CD4-positive, alpha-beta memory T cell (primary cell): ENCODE measurements at regions of chr1 and their contacts with region 1.

Region 1: DNA sequence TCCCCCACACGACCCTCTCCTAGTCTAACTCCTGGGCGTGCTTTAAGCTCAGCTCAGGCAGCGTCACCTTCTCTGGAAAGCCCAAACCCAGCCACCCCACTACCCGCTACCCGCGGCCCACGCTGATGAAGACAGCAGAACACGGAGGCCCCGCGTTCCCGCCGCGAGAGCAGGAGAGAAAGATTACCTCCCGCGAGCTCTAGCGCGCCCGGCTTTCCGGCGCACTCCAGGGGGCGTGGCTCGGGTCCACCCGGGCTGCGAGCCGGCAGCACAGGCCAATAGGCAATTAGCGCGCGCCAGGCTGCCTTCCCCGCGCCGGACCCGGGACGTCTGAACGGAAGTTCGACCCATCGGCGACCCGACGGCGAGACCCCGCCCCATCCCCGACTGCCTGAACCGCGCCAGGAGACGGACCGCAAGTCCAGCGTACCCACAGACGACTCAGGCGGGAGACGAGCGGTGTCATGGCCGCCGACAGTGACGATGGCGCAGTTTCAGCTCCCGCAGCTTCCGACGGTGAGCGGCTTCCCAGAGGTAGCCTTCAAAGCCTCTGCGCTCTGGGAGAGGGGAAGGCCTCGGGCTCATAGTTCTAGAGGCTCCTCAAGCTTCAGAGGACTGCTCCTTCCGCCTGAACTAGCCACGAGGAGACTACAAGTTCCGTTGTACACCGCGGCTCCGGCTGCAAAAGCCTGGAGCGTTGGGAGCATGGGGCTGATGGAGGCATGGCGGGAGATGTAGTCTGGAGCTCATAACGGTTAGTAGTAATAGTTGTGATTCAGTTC is at the starts of genes MUTYH and TOE1:
- DNase-seq: peak; percentile 89 to 92 (median 90)
- H3K4me3 ChIP-seq: peak within 1 kb of the TSS; percentile 84 to 91
- H3K4me3 Mint-ChIP-seq: peak within 1 kb of the TSS; percentile 98 to 100 (median 100)
- H3K27ac ChIP-seq: peak within 1 kb of the TSS; percentile 93
- H3K27ac Mint-ChIP-seq: peak within 1 kb of the TSS; percentile 96 to 100 (median 99)
- H3K4me1 ChIP-seq: peaks cover 46% of the 10 kb centered on the region
- H3K4me1 Mint-ChIP-seq: peaks cover 31 to 75% (median 51%) of the 10 kb centered on the region in 4 donors
- H3K27me3 ChIP-seq: no peaks in the 10 kb centered on the region
- H3K27me3 Mint-ChIP-seq: no peaks in the 10 kb centered on the region
- total RNA-seq, gene MUTYH: 70.0 to 72.1 TPM
- total RNA-seq, gene TOE1: 18.2 to 18.9 TPM

Region 2: DNA sequence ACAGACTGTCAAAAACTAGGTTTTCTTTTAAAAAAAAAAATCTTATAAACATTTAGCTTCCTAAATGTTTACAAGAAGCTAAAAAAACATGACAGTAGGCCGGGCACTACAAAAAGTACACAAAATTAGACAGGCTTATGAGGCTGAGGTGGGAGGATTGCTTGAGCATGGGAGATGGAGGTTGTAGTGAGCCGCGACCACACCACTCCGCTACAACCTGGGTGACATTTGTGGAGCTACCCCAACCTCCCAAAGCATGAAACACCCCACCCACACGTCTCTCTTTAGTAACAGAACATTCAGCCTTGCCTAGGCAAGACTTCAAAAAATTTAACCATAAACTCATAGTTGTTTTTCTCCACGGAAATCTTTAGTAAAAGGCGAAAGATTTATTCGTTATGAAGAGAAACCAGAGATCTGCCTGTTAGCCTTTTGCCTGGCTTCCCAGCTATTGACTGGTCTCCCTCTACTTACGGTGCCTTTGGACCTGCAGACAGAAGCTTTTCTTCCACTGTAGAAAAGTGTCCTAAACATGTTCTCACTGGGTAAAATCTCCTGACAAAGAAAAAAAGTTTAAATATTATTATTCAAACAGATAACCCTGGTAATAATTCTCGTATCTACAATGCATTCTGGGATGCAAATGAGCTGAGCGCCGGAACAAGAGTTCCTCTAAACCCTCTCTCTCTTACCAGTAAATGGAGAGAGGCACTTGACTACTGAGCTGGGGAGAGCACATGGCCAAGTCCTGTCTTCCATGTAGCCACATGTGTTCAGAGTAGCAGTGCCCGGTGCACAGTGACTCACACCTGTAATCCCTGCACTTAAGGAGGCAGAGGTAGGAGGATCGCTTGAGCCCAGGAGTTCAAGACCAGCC is 618.3 kb before region 1 on chr1:
- CTCF ChIA-PET with region 1: no interaction called
- POLR2A ChIA-PET with region 1: interaction called, 11 read pairs
- intact Hi-C with region 1: no loop called
- DNase-seq: peak; percentile 77 to 85 (median 79)
- H3K4me3 ChIP-seq: no peak overlapping the region
- H3K4me3 Mint-ChIP-seq: peak overlapping the region; percentile 57 to 87 (median 80)
- H3K27ac ChIP-seq: peak overlapping the region; percentile 51
- H3K27ac Mint-ChIP-seq: peak overlapping the region; percentile 89 to 97 (median 94)
- H3K4me1 ChIP-seq: peaks cover 58% of the 10 kb centered on the region
- H3K4me1 Mint-ChIP-seq: peaks cover 50 to 74% (median 62%) of the 10 kb centered on the region in 4 donors
- H3K27me3 ChIP-seq: no peaks in the 10 kb centered on the region
- H3K27me3 Mint-ChIP-seq: no peaks in the 10 kb centered on the region

Region 3: GRCh38 chr1:44775078-44775929 is 564.7 kb before region 1 on chr1 and contains the start of gene RPS8:
- CTCF ChIA-PET with region 1: no interaction called
- POLR2A ChIA-PET with region 1: interaction called, 23 read pairs
- intact Hi-C with region 1: no loop called
- DNase-seq: peak; percentile 89 to 92 (median 91)
- H3K4me3 ChIP-seq: peak within 1 kb of the TSS; percentile 87 to 88
- H3K4me3 Mint-ChIP-seq: peak within 1 kb of the TSS; percentile 89 to 98 (median 94)
- H3K27ac ChIP-seq: peak within 1 kb of the TSS; percentile 78
- H3K27ac Mint-ChIP-seq: peak within 1 kb of the TSS; percentile 82 to 99 (median 98)
- H3K4me1 ChIP-seq: peaks cover 25% of the 10 kb centered on the region
- H3K4me1 Mint-ChIP-seq: peaks cover 20 to 56% (median 27%) of the 10 kb centered on the region in 4 donors
- H3K27me3 ChIP-seq: no peaks in the 10 kb centered on the region
- H3K27me3 Mint-ChIP-seq: no peaks in the 10 kb centered on the region
- total RNA-seq, gene RPS8: 2,728 to 2,811 TPM

Region 4: DNA sequence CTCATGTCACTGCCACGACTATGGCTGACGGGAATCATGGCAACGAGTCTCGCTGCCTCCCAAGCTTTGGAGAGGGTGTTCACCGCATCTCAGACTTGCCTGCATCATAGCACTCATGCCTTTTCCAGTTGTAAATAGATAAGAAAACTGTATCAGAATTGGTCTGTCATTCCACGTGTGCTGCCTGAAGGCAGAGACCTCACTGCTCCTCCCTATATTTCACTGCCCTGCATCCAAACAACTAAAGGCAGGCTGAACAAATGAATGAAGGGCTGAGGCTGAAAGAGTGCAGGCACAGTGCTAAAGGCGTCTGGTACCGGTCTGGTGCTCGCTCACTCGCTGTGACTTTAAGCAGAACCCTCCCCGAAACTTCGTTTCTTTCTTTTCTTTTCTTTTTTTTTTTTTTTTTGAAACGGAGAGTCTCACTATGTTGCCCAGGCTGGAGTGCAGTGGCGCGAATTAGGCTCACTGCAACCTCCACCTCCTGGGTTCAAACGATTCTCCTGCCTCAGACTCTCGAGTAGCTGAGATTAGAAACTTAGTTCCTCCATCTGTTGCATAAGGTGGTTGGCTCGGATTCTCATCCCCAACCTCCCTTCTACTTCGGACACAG is 354.1 kb before region 1 on chr1:
- CTCF ChIA-PET with region 1: interaction called, 3 read pairs
- POLR2A ChIA-PET with region 1: interaction called, 16 read pairs
- intact Hi-C with region 1: no loop called
- DNase-seq: no peak
- H3K4me3 ChIP-seq: peak overlapping the region; percentile 67 to 70
- H3K4me3 Mint-ChIP-seq: peak overlapping the region; percentile 98 to 100 (median 99)
- H3K27ac ChIP-seq: peak overlapping the region; percentile 59
- H3K27ac Mint-ChIP-seq: peak overlapping the region; percentile 34 to 99 (median 96)
- H3K4me1 ChIP-seq: peaks cover 11% of the 10 kb centered on the region
- H3K4me1 Mint-ChIP-seq: peaks cover 15 to 26% (median 21%) of the 10 kb centered on the region in 4 donors
- H3K27me3 ChIP-seq: no peaks in the 10 kb centered on the region
- H3K27me3 Mint-ChIP-seq: no peaks in the 10 kb centered on the region

Region 5: GRCh38 chr1:45499415-45499769 is 159.4 kb after region 1 on chr1:
- CTCF ChIA-PET with region 1: interaction called, 66 read pairs
- POLR2A ChIA-PET with region 1: interaction called, 53 read pairs
- intact Hi-C with region 1: loop called (anchors 1 kb)
- DNase-seq: peak in 1 of 5 donors; percentile 4
- H3K4me3 ChIP-seq: peak overlapping the region; percentile 62 to 88
- H3K4me3 Mint-ChIP-seq: peak overlapping the region; percentile 91 to 96 (median 95)
- H3K27ac ChIP-seq: peak overlapping the region; percentile 62
- H3K27ac Mint-ChIP-seq: peak overlapping the region; percentile 81 to 98 (median 96)
- H3K4me1 ChIP-seq: peaks cover 18% of the 10 kb centered on the region
- H3K4me1 Mint-ChIP-seq: peaks cover 31 to 34% (median 31%) of the 10 kb centered on the region in 4 donors
- H3K27me3 ChIP-seq: no peaks in the 10 kb centered on the region
- H3K27me3 Mint-ChIP-seq: no peaks in the 10 kb centered on the region

Region 6: GRCh38 chr1:45569962-45570581 is 230.1 kb after region 1 on chr1:
- CTCF ChIA-PET with region 1: interaction called, 10 read pairs
- POLR2A ChIA-PET with region 1: interaction called, 5 read pairs
- intact Hi-C with region 1: no loop called
- DNase-seq: peak; percentile 67 to 73 (median 72)
- H3K4me3 ChIP-seq: no peak overlapping the region
- H3K4me3 Mint-ChIP-seq: no peak overlapping the region
- H3K27ac ChIP-seq: no peak overlapping the region
- H3K27ac Mint-ChIP-seq: peak overlapping the region in 6 of 7 donors; percentile 28 to 88 (median 54)
- H3K4me1 ChIP-seq: no peaks in the 10 kb centered on the region
- H3K4me1 Mint-ChIP-seq: peaks cover 0 to 3% (median 0%) of the 10 kb centered on the region in 4 donors
- H3K27me3 ChIP-seq: no peaks in the 10 kb centered on the region
- H3K27me3 Mint-ChIP-seq: no peaks in the 10 kb centered on the region